ENCODE measurements at regions of chr3 and their contacts with region 1.

Region 1: DNA sequence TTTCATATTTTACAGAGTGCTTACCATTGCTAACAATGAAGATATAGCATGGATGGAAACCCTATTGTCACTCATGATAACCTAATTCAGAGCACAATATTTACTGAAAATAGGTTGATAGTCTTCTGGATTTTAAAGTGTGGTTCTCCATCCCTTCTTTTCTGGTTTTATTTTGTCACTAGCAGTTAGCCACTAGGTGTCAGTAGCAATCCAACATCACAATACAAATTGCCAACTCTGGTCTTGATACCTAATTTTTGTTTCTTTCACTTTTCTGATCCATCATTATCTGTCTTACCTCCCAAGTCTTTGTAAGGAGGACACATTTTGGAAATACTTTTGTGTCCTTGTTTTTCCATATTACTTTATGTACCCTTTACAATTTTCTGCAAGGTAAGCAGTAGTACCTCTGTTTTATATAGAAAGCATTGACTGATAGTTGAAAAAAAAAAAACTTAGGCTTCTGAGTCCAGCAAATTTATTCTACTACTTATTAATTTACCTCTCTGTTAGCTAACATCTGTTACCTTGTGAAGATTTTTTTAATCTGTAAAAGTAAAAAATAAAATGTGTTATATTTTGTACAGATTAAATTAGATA is 28.3 kb upstream of the CRYBG3 start:
- DNase-seq: peak; percentile 4
- ATAC-seq: peak; percentile 74
- H3K4me3 ChIP-seq: no peak overlapping the region
- H3K27ac ChIP-seq: no peak overlapping the region
- H3K4me1 ChIP-seq: no peaks in the 10 kb centered on the region
- H3K27me3 ChIP-seq: no peaks in the 10 kb centered on the region
- CTCF ChIP-seq: peak; percentile 57 to 80 (median 68); a peak in 4 of 6 replicates
- EP300 ChIP-seq: no peak
- POLR2A ChIP-seq: no peak
- RAD21 ChIP-seq: peak; percentile 90

Region 2: GRCh38 chr3:97952280-97952679 is 158.8 kb after region 1 on chr3:
- CTCF ChIA-PET with region 1: no interaction called
- POLR2A ChIA-PET with region 1: no interaction called
- RAD21 ChIA-PET with region 1: no interaction called
- SMC1A ChIA-PET with region 1: interaction called, 3 read pairs
- in situ Hi-C with region 1: no loop called
- intact Hi-C with region 1: loop called (anchors 5 kb)
- DNase-seq: no peak
- ATAC-seq: no peak
- H3K4me3 ChIP-seq: no peak overlapping the region
- H3K27ac ChIP-seq: no peak overlapping the region
- H3K4me1 ChIP-seq: peaks cover 8% of the 10 kb centered on the region
- H3K27me3 ChIP-seq: no peaks in the 10 kb centered on the region
- CTCF ChIP-seq: no peak
- EP300 ChIP-seq: no peak
- POLR2A ChIP-seq: no peak
- RAD21 ChIP-seq: no peak